Mammary epithelial cell (primary cell): ENCODE measurements at regions of chr6 and their contacts with region 1.

Region 1: GRCh38 chr6:23690453-23691430 is 435.3 kb upstream of the NRSN1 start:
- DNase-seq: no peak
- H3K4me3 ChIP-seq: no peak overlapping the region
- H3K27ac ChIP-seq: no peak overlapping the region
- H3K4me1 ChIP-seq: no peaks in the 10 kb centered on the region
- H3K27me3 ChIP-seq: no peaks in the 10 kb centered on the region
- CTCF ChIP-seq: no peak

Region 2: GRCh38 chr6:22681761-22682160 is 1009.0 kb before region 1 on chr6:
- CTCF ChIA-PET with region 1: no interaction called
- dilution Hi-C with region 1: no loop called
- in situ Hi-C with region 1: no loop called
- intact Hi-C with region 1: no loop called
- DNase-seq: no peak
- H3K4me3 ChIP-seq: no peak overlapping the region
- H3K27ac ChIP-seq: no peak overlapping the region
- H3K4me1 ChIP-seq: peaks cover 4% of the 10 kb centered on the region
- H3K27me3 ChIP-seq: no peaks in the 10 kb centered on the region
- CTCF ChIP-seq: no peak

Region 3: GRCh38 chr6:23704479-23705052 is 13.8 kb after region 1 on chr6:
- CTCF ChIA-PET with region 1: no interaction called
- dilution Hi-C with region 1: no loop called
- in situ Hi-C with region 1: no loop called
- intact Hi-C with region 1: no loop called
- DNase-seq: no peak
- H3K4me3 ChIP-seq: no peak overlapping the region
- H3K27ac ChIP-seq: no peak overlapping the region
- H3K4me1 ChIP-seq: no peaks in the 10 kb centered on the region
- H3K27me3 ChIP-seq: no peaks in the 10 kb centered on the region
- CTCF ChIP-seq: no peak

Region 4: DNA sequence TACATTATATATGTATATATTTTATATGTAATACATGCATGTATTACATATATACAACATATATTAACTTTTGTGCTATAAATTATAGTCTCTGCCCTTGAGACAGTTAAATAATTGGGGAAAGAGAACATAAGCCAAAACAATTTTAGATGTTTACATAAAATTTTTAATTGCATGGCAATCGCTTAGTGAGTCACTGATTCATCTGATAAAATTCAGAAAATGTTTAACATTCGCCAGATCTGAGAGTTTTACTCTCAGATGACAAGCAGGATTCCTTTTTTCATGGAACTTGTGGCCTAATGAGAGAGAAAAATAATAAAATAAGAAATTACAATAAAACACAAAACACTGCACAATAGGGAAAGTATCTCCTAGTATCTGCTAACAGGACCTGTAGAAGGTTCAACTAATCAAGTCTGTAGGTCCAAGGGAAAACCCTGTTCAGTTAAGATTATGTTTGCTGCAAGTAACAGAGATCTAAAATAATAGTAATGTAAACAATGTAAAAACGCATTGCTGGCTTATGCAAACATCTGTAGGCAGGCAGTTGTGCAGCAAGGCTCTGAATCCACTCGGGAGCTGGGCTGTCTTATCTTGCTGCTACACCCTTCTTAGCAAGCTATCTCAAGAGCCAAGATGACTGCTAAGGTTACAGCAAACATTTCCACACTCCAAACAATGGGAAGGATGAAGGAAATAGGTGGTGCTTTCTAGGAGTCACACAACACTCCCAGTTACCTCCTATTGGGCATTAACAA is 37.8 kb after region 1 on chr6:
- CTCF ChIA-PET with region 1: no interaction called
- dilution Hi-C with region 1: no loop called
- in situ Hi-C with region 1: no loop called
- intact Hi-C with region 1: loop called (anchors 2 kb)
- DNase-seq: no peak
- H3K4me3 ChIP-seq: no peak overlapping the region
- H3K27ac ChIP-seq: no peak overlapping the region
- H3K4me1 ChIP-seq: no peaks in the 10 kb centered on the region
- H3K27me3 ChIP-seq: no peaks in the 10 kb centered on the region
- CTCF ChIP-seq: no peak